Gastrocnemius medialis (tissue), 4 donors: ENCODE measurements at regions of chr13 and their contacts with region 1.

Region 1: DNA sequence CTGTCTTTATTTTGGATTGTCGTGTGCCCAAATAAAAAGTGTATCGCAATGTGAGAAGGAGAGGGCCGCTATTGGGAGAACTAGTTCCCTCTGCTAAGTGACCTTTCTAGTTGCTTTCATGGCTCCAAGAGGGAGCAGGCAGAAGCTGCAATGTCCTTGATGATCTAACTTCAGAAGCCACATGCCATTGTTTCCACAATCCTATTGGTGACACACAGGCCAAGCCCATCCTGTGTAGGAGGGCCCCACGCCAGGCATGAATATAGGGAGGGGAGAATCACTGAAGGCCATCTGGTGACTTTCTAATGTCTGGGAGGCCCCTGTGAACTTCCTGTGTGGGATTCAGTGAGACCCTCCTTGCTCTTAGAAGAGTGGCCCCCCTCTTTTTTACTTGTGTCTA is 47.8 kb upstream of the KPNA3 start:
- DNase-seq: no peak
- ATAC-seq: no peak
- H3K4me3 ChIP-seq: no peak overlapping the region
- H3K27ac ChIP-seq: no peak overlapping the region
- H3K4me1 ChIP-seq: no peaks in the 10 kb centered on the region
- H3K27me3 ChIP-seq: no peaks in the 10 kb centered on the region
- CTCF ChIP-seq: no peak
- POLR2A ChIP-seq: no peak

Region 2: DNA sequence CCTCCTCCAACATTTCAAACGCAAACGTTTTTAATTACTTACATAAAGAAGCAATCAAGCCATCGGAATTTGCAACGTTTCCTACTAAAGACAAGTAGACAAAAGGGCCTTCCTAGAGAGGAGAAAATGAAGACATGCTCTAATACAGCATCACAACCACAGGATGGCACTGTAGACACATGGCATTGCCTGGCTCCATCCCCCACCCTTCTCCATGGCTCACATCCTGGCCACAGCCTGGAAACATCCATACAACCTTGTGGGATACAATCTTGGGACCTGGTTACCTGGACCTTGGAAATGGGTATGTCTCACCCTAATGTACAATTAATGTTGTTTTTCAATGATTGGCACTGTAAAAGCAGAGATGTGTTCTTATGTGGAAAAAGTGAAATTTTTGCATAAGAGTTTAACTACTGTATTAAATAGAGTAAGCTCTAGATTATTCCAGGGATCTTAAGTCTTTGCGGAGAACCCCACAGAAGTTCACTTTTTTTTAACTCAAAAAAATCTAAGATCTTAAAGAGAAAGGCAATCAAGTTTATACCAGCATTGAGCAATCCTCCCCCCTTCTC is 170.4 kb before region 1 on chr13:
- in situ Hi-C with region 1: loop called in 1 of 4 experiments (anchors 10 kb)
- intact Hi-C with region 1: no loop called
- DNase-seq: peak in 1 of 2 donors; percentile 59
- ATAC-seq: peak; percentile 94 to 97
- H3K4me3 ChIP-seq: no peak overlapping the region
- H3K27ac ChIP-seq: no peak overlapping the region
- H3K4me1 ChIP-seq: peaks cover 5 to 7% of the 10 kb centered on the region in 2 donors
- H3K27me3 ChIP-seq: no peaks in the 10 kb centered on the region
- CTCF ChIP-seq: peak; percentile 49 to 86 (median 54)
- POLR2A ChIP-seq: no peak

Region 3: GRCh38 chr13:49731766-49732165 is 108.5 kb before region 1 on chr13:
- in situ Hi-C with region 1: no loop called
- intact Hi-C with region 1: loop called (anchors 10 kb)
- DNase-seq: no peak
- ATAC-seq: peak; percentile 73 to 79
- H3K4me3 ChIP-seq: no peak overlapping the region
- H3K27ac ChIP-seq: peak overlapping the region; percentile 66 to 86 (median 72)
- H3K4me1 ChIP-seq: peaks cover 23 to 32% of the 10 kb centered on the region in 2 donors
- H3K27me3 ChIP-seq: no peaks in the 10 kb centered on the region
- CTCF ChIP-seq: no peak
- POLR2A ChIP-seq: no peak